ENCODE measurements at regions of chr10 and their contacts with region 1.

Region 1: GRCh38 chr10:6445501-6446316 is 134.4 kb downstream of the PRKCQ start:
- DNase-seq: peak in 8 of 9 donors; percentile 28 to 49 (median 43)
- ATAC-seq: peak; percentile 64
- H3K4me3 ChIP-seq: no peak overlapping the region
- H3K4me3 Mint-ChIP-seq: peak overlapping the region in 5 of 10 donors; percentile 0 to 60 (median 30)
- H3K27ac ChIP-seq: peak overlapping the region; percentile 17
- H3K27ac Mint-ChIP-seq: peak overlapping the region; percentile 4 to 84 (median 66)
- H3K4me1 ChIP-seq: no peaks in the 10 kb centered on the region
- H3K4me1 Mint-ChIP-seq: peaks cover 10 to 49% (median 31%) of the 10 kb centered on the region in 7 donors
- H3K27me3 ChIP-seq: no peaks in the 10 kb centered on the region
- H3K27me3 Mint-ChIP-seq: no peaks in the 10 kb centered on the region

Region 2: GRCh38 chr10:6507311-6507710 is 61.6 kb after region 1 on chr10:
- CTCF ChIA-PET with region 1: no interaction called
- POLR2A ChIA-PET with region 1: no interaction called
- intact Hi-C with region 1: no loop called
- DNase-seq: no peak
- ATAC-seq: no peak
- H3K4me3 ChIP-seq: no peak overlapping the region
- H3K4me3 Mint-ChIP-seq: peak overlapping the region in 1 of 10 donors; percentile 69
- H3K27ac ChIP-seq: peak overlapping the region; percentile 9
- H3K27ac Mint-ChIP-seq: peak overlapping the region in 7 of 9 donors; percentile 36 to 91 (median 56)
- H3K4me1 ChIP-seq: peaks cover 6 to 23% of the 10 kb centered on the region in 2 donors
- H3K4me1 Mint-ChIP-seq: peaks cover 20 to 53% (median 49%) of the 10 kb centered on the region in 7 donors
- H3K27me3 ChIP-seq: no peaks in the 10 kb centered on the region
- H3K27me3 Mint-ChIP-seq: no peaks in the 10 kb centered on the region

Region 3: GRCh38 chr10:6563075-6563474 is 117.4 kb after region 1 on chr10:
- CTCF ChIA-PET with region 1: no interaction called
- POLR2A ChIA-PET with region 1: no interaction called
- intact Hi-C with region 1: loop called in 1 of 2 experiments (anchors 5 kb)
- DNase-seq: peak in 4 of 9 donors; percentile 33 to 60 (median 39)
- ATAC-seq: peak; percentile 56
- H3K4me3 ChIP-seq: peak overlapping the region; percentile 42
- H3K4me3 Mint-ChIP-seq: peak overlapping the region; percentile 69 to 89 (median 80)
- H3K27ac ChIP-seq: peak overlapping the region; percentile 46
- H3K27ac Mint-ChIP-seq: peak overlapping the region; percentile 47 to 94 (median 87)
- H3K4me1 ChIP-seq: peaks cover 69 to 73% of the 10 kb centered on the region in 2 donors
- H3K4me1 Mint-ChIP-seq: peaks cover 65 to 96% (median 91%) of the 10 kb centered on the region in 7 donors
- H3K27me3 ChIP-seq: no peaks in the 10 kb centered on the region
- H3K27me3 Mint-ChIP-seq: no peaks in the 10 kb centered on the region

Region 4: GRCh38 chr10:6647811-6648526 is 202.3 kb after region 1 on chr10:
- CTCF ChIA-PET with region 1: interaction called, 15 read pairs
- POLR2A ChIA-PET with region 1: no interaction called
- intact Hi-C with region 1: loop called (anchors 1 kb)
- DNase-seq: peak; percentile 37 to 75 (median 64)
- ATAC-seq: peak; percentile 94
- H3K4me3 ChIP-seq: no peak overlapping the region
- H3K4me3 Mint-ChIP-seq: peak overlapping the region in 1 of 10 donors; percentile 32
- H3K27ac ChIP-seq: no peak overlapping the region
- H3K27ac Mint-ChIP-seq: peak overlapping the region in 3 of 9 donors; percentile 19 to 67 (median 38)
- H3K4me1 ChIP-seq: peaks cover 5 to 10% of the 10 kb centered on the region in 2 donors
- H3K4me1 Mint-ChIP-seq: peaks cover 0 to 46% (median 27%) of the 10 kb centered on the region in 7 donors
- H3K27me3 ChIP-seq: no peaks in the 10 kb centered on the region
- H3K27me3 Mint-ChIP-seq: no peaks in the 10 kb centered on the region

Region 5: GRCh38 chr10:6678211-6678803 is 232.6 kb after region 1 on chr10:
- CTCF ChIA-PET with region 1: interaction called, 4 read pairs
- POLR2A ChIA-PET with region 1: no interaction called
- intact Hi-C with region 1: loop called in 1 of 2 experiments (anchors 1 kb)
- DNase-seq: peak in 8 of 9 donors; percentile 24 to 55 (median 48)
- ATAC-seq: peak; percentile 56
- H3K4me3 ChIP-seq: no peak overlapping the region
- H3K4me3 Mint-ChIP-seq: no peak overlapping the region
- H3K27ac ChIP-seq: no peak overlapping the region
- H3K27ac Mint-ChIP-seq: no peak overlapping the region
- H3K4me1 ChIP-seq: no peaks in the 10 kb centered on the region
- H3K4me1 Mint-ChIP-seq: peaks cover 0 to 12% (median 0%) of the 10 kb centered on the region in 7 donors
- H3K27me3 ChIP-seq: no peaks in the 10 kb centered on the region
- H3K27me3 Mint-ChIP-seq: peaks cover 0 to 66% (median 0%) of the 10 kb centered on the region in 5 donors